ENCODE measurements at regions of chr12 and their contacts with region 1.

Region 1: GRCh38 chr12:124311292-124312109 is 16.6 kb downstream of the RFLNA start:
- DNase-seq: no peak
- ATAC-seq: no peak
- H3K4me3 ChIP-seq: no peak overlapping the region
- H3K27ac ChIP-seq: no peak overlapping the region
- H3K4me1 ChIP-seq: no peaks in the 10 kb centered on the region
- H3K27me3 ChIP-seq: no peaks in the 10 kb centered on the region
- CTCF ChIP-seq: no peak

Region 2: GRCh38 chr12:123860377-123860776 is 451.1 kb before region 1 on chr12:
- intact Hi-C with region 1: loop called in 1 of 10 experiments (anchors 10 kb)
- DNase-seq: no peak
- ATAC-seq: no peak
- H3K4me3 ChIP-seq: no peak overlapping the region
- H3K27ac ChIP-seq: no peak overlapping the region
- H3K4me1 ChIP-seq: no peaks in the 10 kb centered on the region
- H3K27me3 ChIP-seq: peaks cover 0 to 27% (median 9%) of the 10 kb centered on the region in 7 donors
- CTCF ChIP-seq: no peak

Region 3: DNA sequence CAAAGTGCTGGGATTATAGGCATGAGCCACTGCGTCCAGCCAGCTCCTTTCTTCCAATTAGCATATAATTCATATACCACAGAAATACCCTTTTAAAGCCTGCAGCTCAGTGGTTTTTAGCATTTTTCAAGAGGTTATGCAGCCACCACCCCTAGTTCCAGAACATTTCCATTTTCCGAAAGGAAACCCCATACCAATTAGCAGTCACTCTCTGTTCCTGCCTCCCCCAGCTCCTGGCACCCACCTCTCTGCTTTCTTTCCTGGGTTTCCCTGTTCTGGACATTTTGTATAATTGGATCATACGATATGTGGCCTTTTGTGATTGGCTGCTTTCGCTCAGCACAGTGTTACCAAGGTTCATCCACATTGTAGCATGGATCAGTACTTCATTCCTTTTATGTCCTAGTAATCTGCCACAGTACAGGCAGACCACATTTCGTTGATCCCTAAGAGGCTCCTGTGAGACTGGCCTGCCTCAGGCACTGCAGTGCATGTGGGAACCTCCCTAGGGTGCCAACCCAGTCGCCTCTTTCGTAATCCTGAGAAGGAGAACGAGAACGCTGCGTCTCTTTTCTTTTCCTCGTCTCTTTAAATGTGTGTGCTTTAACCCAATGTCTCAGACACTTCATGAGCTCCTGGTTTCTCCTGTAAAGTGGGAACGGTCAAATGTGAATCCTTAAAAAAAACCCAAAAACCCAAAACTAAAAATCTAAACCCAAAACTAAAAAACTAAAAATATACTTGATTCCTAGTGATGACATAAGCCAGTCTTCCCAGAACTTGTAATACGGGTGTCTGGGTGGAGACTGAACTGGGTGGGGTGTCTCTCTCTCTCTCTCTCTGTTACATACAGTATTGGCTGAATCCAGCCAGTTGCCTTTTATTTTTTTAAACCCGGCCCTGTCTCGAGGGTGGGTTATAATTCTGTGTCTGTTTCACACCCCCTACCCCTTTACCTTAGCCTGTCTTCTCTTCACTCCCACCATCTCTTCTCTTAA is 768.4 kb after region 1 on chr12:
- intact Hi-C with region 1: no loop called
- DNase-seq: no peak
- ATAC-seq: peak in 6 of 8 donors; percentile 45 to 88 (median 77)
- H3K4me3 ChIP-seq: no peak overlapping the region
- H3K27ac ChIP-seq: peak overlapping the region in 7 of 10 donors; percentile 3 to 65 (median 46)
- H3K4me1 ChIP-seq: peaks cover 0 to 4% (median 0%) of the 10 kb centered on the region in 9 donors
- H3K27me3 ChIP-seq: no peaks in the 10 kb centered on the region
- CTCF ChIP-seq: no peak